ENCODE measurements at regions of chr10 and their contacts with region 1.

Region 1: DNA sequence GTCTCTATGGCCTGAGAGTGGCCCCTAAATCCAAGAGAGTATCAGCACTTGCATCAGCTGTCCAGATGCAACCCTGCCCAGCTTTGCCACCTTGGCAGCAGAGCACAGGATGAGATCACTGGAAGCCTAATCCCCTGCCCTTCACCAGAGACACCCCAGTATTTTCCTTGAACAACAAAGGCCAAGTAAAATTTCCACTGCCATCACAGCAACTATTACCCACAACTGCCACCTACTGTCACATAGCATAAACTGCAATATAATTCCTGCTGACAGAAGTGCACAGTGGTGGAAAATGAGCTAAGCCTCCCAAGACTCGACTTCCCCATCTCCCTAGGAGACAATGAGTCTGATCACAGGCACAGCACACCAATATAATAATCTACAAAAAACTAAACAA is 462.8 kb upstream of the ZWINT start:
- DNase-seq: peak; percentile 64
- H3K4me3 ChIP-seq: no peak overlapping the region
- H3K27ac ChIP-seq: no peak overlapping the region
- H3K4me1 ChIP-seq: peaks cover 3% of the 10 kb centered on the region
- CTCF ChIP-seq: peak; percentile 84

Region 2: GRCh38 chr10:56469482-56469881 is 354.4 kb before region 1 on chr10:
- CTCF ChIA-PET with region 1: no interaction called
- POLR2A ChIA-PET with region 1: no interaction called
- intact Hi-C with region 1: loop called (anchors 5 kb)
- DNase-seq: peak; percentile 41
- H3K4me3 ChIP-seq: no peak overlapping the region
- H3K27ac ChIP-seq: no peak overlapping the region
- H3K4me1 ChIP-seq: no peaks in the 10 kb centered on the region
- CTCF ChIP-seq: peak; percentile 68

Region 3: GRCh38 chr10:56856569-56856968 is 32.7 kb after region 1 on chr10:
- CTCF ChIA-PET with region 1: no interaction called
- POLR2A ChIA-PET with region 1: no interaction called
- intact Hi-C with region 1: no loop called
- DNase-seq: no peak
- H3K4me3 ChIP-seq: no peak overlapping the region
- H3K27ac ChIP-seq: no peak overlapping the region
- H3K4me1 ChIP-seq: no peaks in the 10 kb centered on the region
- CTCF ChIP-seq: no peak